Mucosa of descending colon (tissue), 3 donors: ENCODE measurements at regions of chr2 and their contacts with region 1.

Region 1: DNA sequence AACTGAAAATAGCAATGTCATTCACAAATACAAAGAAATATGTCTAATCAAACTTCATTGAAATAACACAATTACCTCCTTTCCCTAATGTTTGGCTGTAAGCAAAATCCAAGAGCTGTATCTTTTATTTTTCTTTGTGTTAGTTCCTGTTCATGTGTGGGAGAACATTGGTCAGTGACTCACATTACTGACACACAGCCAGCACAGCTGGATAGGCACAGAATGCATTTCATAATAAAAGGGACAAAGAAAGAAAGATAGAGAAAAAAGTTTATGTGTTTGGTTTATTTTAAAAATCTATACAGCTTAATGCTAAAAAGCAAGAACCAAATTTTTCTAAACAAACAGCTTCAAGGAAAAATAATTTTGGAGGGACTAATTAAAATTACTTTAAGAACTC is 185.6 kb upstream of the COL3A1 start:
- DNase-seq: peak in 1 of 3 donors; percentile 53
- ATAC-seq: peak; percentile 35
- H3K4me3 ChIP-seq: no peak overlapping the region
- H3K4me1 ChIP-seq: no peaks in the 10 kb centered on the region
- CTCF ChIP-seq: no peak

Region 2: DNA sequence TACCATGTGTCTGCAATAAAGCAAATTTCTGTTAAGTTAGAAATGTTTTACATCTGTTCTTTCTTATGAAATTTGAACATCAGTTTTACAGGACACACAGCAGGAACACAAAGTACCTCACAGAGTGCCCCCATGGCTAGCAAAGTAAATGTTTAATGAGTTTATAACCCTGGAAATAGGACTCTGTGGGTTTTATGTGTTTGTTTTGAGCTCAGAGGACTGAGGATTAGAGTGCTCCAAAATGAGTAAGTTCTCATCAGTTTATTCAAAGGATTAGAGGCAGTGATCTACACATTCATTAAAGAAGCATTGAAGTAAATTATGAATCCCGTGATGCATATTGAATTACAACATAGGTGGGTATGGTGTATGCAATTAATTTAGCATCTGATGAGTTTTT is 215.2 kb before region 1 on chr2:
- intact Hi-C with region 1: no loop called
- DNase-seq: no peak
- ATAC-seq: peak; percentile 93
- H3K4me3 ChIP-seq: no peak overlapping the region
- H3K4me1 ChIP-seq: no peaks in the 10 kb centered on the region
- CTCF ChIP-seq: no peak

Region 3: DNA sequence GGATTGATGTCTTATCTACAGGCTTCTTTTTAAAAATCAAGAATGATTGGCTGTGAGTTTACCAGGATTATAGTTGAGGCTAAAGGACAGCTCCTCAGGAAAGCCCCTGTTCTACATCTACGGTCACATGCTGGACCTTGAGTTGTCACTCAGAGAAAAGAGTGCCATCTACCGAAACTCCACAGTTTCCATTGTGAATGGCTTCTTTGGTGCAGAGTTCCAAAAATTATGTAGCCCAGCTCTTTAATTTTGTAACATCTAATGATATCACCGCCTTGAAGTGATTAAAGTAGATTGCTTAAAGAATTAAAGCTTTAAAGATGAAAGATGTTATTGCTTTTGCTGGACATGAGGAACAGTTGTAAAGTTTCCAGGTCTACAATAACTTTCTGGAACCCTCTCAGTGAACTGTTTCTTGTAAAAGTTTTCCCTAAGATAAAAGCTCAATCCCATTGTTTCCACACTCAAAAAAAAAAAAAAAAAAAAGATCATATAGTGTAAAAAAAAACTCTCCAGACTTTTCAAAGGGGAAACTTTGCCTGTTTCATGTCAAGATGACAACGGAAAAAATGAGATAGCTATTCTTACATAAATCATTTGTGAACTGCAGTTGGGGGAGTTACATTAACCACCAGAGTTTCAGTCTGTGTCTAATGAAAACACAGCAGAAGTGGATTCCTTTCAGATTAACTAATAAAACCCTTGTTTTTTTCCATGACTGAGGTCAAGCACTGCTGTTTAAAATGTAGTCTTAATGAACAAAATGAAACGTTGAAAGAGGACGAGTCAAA is 189.9 kb after region 1 on chr2:
- intact Hi-C with region 1: loop called in 1 of 2 experiments (anchors 5 kb)
- DNase-seq: peak in 1 of 3 donors; percentile 29
- ATAC-seq: peak; percentile 67
- H3K4me3 ChIP-seq: no peak overlapping the region
- H3K4me1 ChIP-seq: no peaks in the 10 kb centered on the region
- CTCF ChIP-seq: no peak